Thyroid gland (tissue), 4 donors: ENCODE measurements at regions of chr22 and their contacts with region 1.

Region 1: GRCh38 chr22:42090596-42091454 is at the start of gene NDUFA6:
- DNase-seq: peak; percentile 99
- H3K4me3 ChIP-seq: peak within 1 kb of the TSS; percentile 58 to 87 (median 72)
- H3K27ac ChIP-seq: peak within 1 kb of the TSS; percentile 89 to 95 (median 94)
- H3K4me1 ChIP-seq: peaks cover 13 to 14% of the 10 kb centered on the region in 2 donors
- H3K27me3 ChIP-seq: no peaks in the 10 kb centered on the region
- CTCF ChIP-seq: peak; percentile 81 to 99 (median 96)
- POLR2A ChIP-seq: peak; percentile 48 to 98
- total RNA-seq, gene NDUFA6: 32.9 to 85.6 (median 73.4) TPM

Region 2: DNA sequence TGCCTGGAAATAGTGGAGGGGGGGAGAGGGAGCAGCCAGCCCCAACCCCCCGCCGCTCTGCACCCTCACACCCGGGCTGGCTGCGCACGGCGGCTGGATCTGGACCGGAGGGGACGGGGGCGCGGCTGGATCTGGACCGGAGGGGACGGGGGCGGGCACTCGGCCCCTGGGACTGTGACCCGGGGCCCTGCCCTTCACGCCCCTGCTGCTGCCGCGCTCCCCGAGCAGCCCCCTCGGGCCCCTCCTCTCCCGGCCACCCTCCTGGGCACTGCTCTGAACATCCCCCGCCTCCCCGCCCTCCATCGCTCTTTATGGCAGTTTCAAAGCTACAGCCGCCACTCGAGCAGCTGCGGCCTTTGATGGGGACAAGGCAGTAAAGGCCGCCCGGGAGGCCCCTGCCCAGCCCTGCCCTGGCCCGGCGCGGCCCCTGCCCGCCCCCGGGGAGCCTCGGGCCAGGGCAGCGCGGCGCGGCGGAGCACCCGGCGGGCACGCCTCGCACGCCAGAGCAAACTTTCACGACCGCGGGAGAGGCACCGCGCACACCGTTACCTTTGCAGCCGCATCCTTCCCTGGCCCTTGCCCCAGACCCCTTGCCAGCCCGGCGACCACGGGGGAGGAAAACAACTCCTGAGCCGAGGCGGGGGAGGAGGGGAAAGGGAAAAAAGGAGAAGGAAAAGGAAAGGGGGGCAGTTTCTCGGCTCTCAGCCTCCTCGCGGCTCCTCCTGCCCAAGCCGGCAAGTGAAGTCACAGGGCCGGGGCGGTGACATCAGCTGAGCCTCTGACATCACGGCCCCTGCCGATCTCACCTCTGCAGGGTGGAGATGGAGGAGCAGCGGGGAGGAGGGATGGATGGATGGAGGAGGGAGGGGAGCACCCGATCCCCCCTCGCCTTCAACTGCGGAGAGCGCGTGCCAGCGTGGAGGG is 192.7 kb after region 1 on chr22:
- intact Hi-C with region 1: loop called (anchors 10 kb)
- DNase-seq: no peak
- H3K4me3 ChIP-seq: no peak overlapping the region
- H3K27ac ChIP-seq: no peak overlapping the region
- H3K4me1 ChIP-seq: peaks cover 4 to 13% of the 10 kb centered on the region in 2 donors
- H3K27me3 ChIP-seq: no peaks in the 10 kb centered on the region
- CTCF ChIP-seq: no peak
- POLR2A ChIP-seq: no peak